ENCODE measurements at regions of chr12 and their contacts with region 1.

Region 1: DNA sequence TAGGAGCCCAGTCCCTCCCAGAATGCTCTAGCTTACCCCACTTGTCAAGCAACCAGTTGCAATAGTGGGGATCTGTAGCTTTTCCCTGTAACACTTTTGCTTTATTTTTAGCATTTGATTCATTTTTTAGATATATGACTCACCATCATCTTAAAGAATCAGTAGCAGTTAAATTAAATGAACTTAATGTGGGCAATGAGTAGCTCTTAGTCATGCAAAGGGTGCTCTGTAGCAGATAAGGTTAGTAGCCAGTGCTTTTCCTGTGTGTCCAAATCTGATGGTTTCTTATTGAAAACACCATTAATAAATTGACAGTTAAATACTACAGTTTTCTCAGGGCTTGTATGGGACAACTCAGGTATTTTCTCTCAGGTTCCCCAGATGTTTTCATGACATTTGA is 311.8 kb downstream of the RERGL start:
- DNase-seq: no peak
- H3K4me3 ChIP-seq: no peak overlapping the region
- H3K27ac ChIP-seq: no peak overlapping the region
- H3K4me1 ChIP-seq: no peaks in the 10 kb centered on the region
- H3K27me3 ChIP-seq: no peaks in the 10 kb centered on the region
- CTCF ChIP-seq: no peak
- POLR2A ChIP-seq: no peak

Region 2: GRCh38 chr12:17841496-17841895 is 63.3 kb after region 1 on chr12:
- intact Hi-C with region 1: no loop called
- DNase-seq: no peak
- H3K4me3 ChIP-seq: no peak overlapping the region
- H3K27ac ChIP-seq: no peak overlapping the region
- H3K4me1 ChIP-seq: no peaks in the 10 kb centered on the region
- H3K27me3 ChIP-seq: no peaks in the 10 kb centered on the region
- CTCF ChIP-seq: no peak
- POLR2A ChIP-seq: no peak

Region 3: DNA sequence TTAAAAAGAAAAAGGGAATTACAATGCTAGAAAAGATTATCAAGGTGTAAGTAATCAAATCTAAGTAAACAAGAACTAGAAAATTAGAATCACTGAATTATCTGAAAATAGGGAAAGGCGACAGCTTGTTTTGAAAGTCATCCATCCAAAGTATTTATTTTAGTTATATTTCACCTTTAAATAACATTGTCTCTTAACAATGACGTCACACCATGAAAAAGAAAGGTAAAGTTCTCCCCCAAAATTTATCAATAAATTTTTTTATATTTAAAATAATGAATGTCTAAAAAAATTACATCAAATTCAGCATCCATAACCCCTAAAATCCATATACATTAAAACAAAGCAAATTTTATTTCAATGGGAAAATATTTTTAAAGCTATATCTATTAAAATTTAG is 88.6 kb after region 1 on chr12:
- intact Hi-C with region 1: loop called (anchors 5 kb)
- DNase-seq: no peak
- H3K4me3 ChIP-seq: no peak overlapping the region
- H3K27ac ChIP-seq: no peak overlapping the region
- H3K4me1 ChIP-seq: no peaks in the 10 kb centered on the region
- H3K27me3 ChIP-seq: no peaks in the 10 kb centered on the region
- CTCF ChIP-seq: no peak
- POLR2A ChIP-seq: no peak

Region 4: GRCh38 chr12:18008642-18009041 is 230.4 kb after region 1 on chr12:
- intact Hi-C with region 1: no loop called
- DNase-seq: no peak
- H3K4me3 ChIP-seq: no peak overlapping the region
- H3K27ac ChIP-seq: no peak overlapping the region
- H3K4me1 ChIP-seq: no peaks in the 10 kb centered on the region
- H3K27me3 ChIP-seq: no peaks in the 10 kb centered on the region
- CTCF ChIP-seq: no peak
- POLR2A ChIP-seq: no peak

Region 5: GRCh38 chr12:18074001-18074400 is 295.8 kb after region 1 on chr12:
- intact Hi-C with region 1: no loop called
- DNase-seq: no peak
- H3K4me3 ChIP-seq: no peak overlapping the region
- H3K27ac ChIP-seq: no peak overlapping the region
- H3K4me1 ChIP-seq: no peaks in the 10 kb centered on the region
- H3K27me3 ChIP-seq: no peaks in the 10 kb centered on the region
- CTCF ChIP-seq: no peak
- POLR2A ChIP-seq: no peak